MCF 10A (cell line): ENCODE measurements at regions of chr11 and their contacts with region 1.

Region 1: DNA sequence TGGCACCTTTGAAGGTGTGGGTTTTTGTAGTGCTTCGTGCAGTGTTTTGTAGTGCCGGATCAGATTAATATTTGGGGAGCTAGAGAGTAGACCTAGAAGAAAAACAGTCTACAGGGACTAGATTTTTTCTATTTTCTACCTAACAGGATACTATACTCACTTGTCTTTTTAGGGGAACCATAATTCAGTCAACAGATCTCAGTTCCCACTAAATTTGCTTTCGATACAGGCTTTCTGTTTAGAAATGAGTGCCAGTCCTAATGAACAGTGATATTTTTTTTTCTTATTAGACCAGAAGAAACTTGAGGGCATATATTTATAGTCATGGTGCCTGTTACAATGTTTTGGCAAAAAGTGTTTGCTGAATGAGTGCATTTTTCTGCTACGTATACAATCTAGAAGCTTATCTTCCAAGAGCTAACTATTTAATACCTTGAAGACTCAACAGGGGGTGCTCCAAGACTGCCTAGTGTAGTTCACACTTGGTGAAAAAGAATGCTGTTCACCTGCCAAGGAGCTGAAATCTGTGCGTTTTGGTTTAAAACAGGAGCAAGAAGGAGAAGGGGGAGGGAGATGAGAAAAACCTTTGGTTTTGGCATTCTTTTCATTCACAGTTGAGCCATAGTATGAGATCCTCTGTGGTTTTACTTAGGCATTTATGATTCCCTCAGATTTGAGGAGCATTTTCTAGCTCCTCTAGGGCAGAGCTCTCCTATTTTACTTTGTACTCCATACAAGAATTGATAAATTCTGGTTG is 44.9 kb upstream of the VSTM5 start:
- DNase-seq: peak; percentile 73
- H3K4me3 Mint-ChIP-seq: no peak overlapping the region
- H3K27ac Mint-ChIP-seq: no peak overlapping the region
- H3K4me1 Mint-ChIP-seq: no peaks in the 10 kb centered on the region
- H3K27me3 Mint-ChIP-seq: peaks cover 37% of the 10 kb centered on the region
- CTCF ChIP-seq: peak; percentile 85

Region 2: GRCh38 chr11:93734427-93735222 is 160.7 kb before region 1 on chr11:
- CTCF ChIA-PET with region 1: no interaction called
- POLR2A ChIA-PET with region 1: no interaction called
- intact Hi-C with region 1: no loop called
- DNase-seq: no peak
- H3K4me3 Mint-ChIP-seq: peak overlapping the region; percentile 28
- H3K27ac Mint-ChIP-seq: no peak overlapping the region
- H3K4me1 Mint-ChIP-seq: peaks cover 31% of the 10 kb centered on the region
- H3K27me3 Mint-ChIP-seq: no peaks in the 10 kb centered on the region
- CTCF ChIP-seq: no peak

Region 3: DNA sequence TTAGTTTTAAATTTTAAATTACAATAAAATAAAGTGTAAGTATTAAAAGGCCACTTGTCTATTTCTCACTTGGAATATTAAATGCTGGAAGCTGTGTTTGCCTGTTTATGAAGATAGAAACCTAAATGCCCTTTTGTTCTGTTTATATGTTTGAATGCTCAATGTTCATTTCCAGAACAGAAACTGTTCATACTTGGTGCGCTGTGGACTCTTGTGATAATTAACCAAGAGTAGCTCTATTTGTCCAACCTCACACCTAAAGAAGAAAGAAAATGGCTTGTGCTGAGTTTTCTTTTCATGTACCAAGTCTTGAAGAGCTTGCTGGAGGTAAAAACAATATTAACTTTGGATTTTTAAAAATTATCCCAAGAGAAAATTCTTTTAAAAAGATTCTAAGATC is 148.2 kb before region 1 on chr11:
- CTCF ChIA-PET with region 1: no interaction called
- POLR2A ChIA-PET with region 1: no interaction called
- intact Hi-C with region 1: no loop called
- DNase-seq: no peak
- H3K4me3 Mint-ChIP-seq: no peak overlapping the region
- H3K27ac Mint-ChIP-seq: no peak overlapping the region
- H3K4me1 Mint-ChIP-seq: peaks cover 7% of the 10 kb centered on the region
- H3K27me3 Mint-ChIP-seq: no peaks in the 10 kb centered on the region
- CTCF ChIP-seq: no peak

Region 4: DNA sequence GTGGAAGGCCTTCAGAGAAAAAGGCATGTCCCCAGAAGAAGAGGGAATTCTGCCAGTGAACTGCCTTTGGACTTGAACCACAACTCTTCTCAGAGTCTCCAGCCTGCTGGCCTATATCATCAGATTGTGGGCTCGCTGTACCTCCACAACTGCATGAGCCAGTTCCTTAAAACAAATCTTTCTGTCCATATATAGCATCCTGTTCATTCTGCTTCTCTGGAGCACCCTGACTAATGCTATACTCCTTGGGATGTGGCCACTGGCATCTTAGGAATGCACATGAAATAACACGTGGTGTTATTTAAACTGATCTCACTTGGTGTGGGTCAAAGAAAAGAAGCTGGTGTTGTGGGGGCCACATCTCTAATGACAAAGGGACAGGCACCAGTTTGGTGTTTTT is 13.4 kb after region 1 on chr11:
- CTCF ChIA-PET with region 1: interaction called, 37 read pairs
- POLR2A ChIA-PET with region 1: interaction called, 5 read pairs
- intact Hi-C with region 1: no loop called
- DNase-seq: peak; percentile 40
- H3K4me3 Mint-ChIP-seq: no peak overlapping the region
- H3K27ac Mint-ChIP-seq: peak overlapping the region; percentile 8
- H3K4me1 Mint-ChIP-seq: peaks cover 18% of the 10 kb centered on the region
- H3K27me3 Mint-ChIP-seq: no peaks in the 10 kb centered on the region
- CTCF ChIP-seq: no peak

Region 5: DNA sequence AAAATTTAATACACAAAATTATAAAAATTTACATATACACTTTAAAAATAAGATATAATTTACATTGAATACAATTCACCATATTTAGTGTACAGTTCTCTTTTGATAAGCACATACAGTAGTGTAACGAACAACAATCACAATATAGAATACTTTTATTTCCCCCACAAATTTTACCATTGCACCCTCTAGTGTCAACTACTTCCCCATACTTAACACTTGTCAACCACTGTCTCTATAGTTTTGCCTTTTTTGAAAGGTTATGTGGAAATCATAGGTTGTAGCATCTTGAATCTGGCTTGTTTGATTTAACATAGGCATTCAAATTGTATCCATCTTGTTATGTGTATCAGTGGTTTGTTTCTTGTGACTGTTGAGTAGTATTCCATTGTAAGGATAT is 212.1 kb after region 1 on chr11:
- CTCF ChIA-PET with region 1: interaction called, 21 read pairs
- POLR2A ChIA-PET with region 1: no interaction called
- intact Hi-C with region 1: loop called (anchors 2 kb)
- DNase-seq: peak; percentile 42
- H3K4me3 Mint-ChIP-seq: no peak overlapping the region
- H3K27ac Mint-ChIP-seq: no peak overlapping the region
- H3K4me1 Mint-ChIP-seq: no peaks in the 10 kb centered on the region
- H3K27me3 Mint-ChIP-seq: no peaks in the 10 kb centered on the region
- CTCF ChIP-seq: peak; percentile 39

Region 6: DNA sequence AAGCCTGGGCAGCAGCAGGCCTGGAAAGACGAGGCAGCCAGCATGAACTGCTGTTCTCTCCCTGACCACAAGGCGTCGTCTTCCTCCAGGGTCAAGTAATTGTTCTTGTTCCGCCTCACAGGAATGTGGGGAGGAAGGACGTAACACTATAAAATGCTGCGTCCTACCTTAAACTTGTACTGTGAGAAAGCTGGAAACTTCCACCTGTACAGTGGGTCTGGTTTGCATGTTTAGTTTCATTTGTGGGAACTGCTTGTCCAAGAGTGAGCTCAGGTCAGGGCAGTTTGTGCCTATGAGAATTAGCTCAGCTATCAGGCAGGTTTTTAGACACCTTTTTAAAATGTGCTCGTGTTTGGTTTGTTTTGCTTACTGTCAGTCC is 288.6 kb after region 1 on chr11:
- CTCF ChIA-PET with region 1: interaction called, 44 read pairs
- POLR2A ChIA-PET with region 1: no interaction called
- intact Hi-C with region 1: loop called (anchors 5 kb)
- DNase-seq: peak; percentile 75
- H3K4me3 Mint-ChIP-seq: no peak overlapping the region
- H3K27ac Mint-ChIP-seq: no peak overlapping the region
- H3K4me1 Mint-ChIP-seq: peaks cover 7% of the 10 kb centered on the region
- H3K27me3 Mint-ChIP-seq: no peaks in the 10 kb centered on the region
- CTCF ChIP-seq: peak; percentile 91

Region 7: GRCh38 chr11:94504689-94505293 is 609.5 kb after region 1 on chr11:
- CTCF ChIA-PET with region 1: interaction called, 35 read pairs
- POLR2A ChIA-PET with region 1: no interaction called
- intact Hi-C with region 1: loop called (anchors 1 kb)
- DNase-seq: peak; percentile 61
- H3K4me3 Mint-ChIP-seq: no peak overlapping the region
- H3K27ac Mint-ChIP-seq: no peak overlapping the region
- H3K4me1 Mint-ChIP-seq: no peaks in the 10 kb centered on the region
- H3K27me3 Mint-ChIP-seq: no peaks in the 10 kb centered on the region
- CTCF ChIP-seq: peak; percentile 34